Activated CD4-positive, alpha-beta memory T cell treated with anti-CD3 and anti-CD28 coated beads for 36 hours (primary cell): ENCODE measurements at regions of chr19 and their contacts with region 1.

Region 1: DNA sequence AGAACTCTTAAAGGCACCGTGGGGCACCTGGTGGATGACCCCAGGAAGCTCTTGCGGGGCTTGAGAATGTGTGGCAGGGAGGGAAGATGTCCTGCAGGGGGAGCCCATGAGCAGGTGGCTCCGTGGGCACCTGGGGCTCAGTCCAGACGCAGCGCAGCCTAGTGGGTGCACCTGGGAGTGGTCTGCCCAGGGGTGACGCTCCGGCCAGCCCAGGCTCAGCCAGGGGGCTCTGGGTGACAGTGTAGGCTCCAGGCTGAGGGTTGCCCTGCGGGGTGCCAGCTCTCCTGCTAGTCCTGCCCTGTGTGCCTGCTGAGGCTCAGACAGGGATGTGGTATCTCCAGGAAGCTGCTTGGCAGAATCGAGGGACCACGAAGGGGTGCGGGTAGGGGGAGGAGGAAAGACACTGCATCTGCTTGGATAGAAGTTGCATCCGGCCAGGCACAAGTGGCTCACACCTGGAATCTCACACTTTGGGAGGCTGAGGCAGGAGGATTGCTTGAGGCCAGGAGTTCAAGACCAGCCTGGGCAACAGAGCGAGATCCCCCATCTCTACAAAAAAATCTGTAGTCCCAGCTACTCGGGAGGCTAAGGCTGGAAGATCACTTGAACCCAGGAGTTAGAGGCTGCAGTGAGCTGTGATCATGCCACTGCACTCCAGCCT is 15.0 kb upstream of the PGLS start:
- DNase-seq: peak; percentile 89
- H3K4me3 Mint-ChIP-seq: no peak overlapping the region
- H3K27ac Mint-ChIP-seq: no peak overlapping the region
- H3K4me1 Mint-ChIP-seq: peaks cover 15% of the 10 kb centered on the region
- H3K27me3 Mint-ChIP-seq: no peaks in the 10 kb centered on the region

Region 2: GRCh38 chr19:17226002-17226933 is 270.2 kb before region 1 on chr19 and contains the start of gene OCEL1:
- CTCF ChIA-PET with region 1: no interaction called
- POLR2A ChIA-PET with region 1: no interaction called
- intact Hi-C with region 1: no loop called
- DNase-seq: peak; percentile 98
- H3K4me3 Mint-ChIP-seq: peak within 1 kb of the TSS; percentile 91
- H3K27ac Mint-ChIP-seq: peak within 1 kb of the TSS; percentile 97
- H3K4me1 Mint-ChIP-seq: peaks cover 6% of the 10 kb centered on the region
- H3K27me3 Mint-ChIP-seq: no peaks in the 10 kb centered on the region
- total RNA-seq, gene OCEL1: 17.6 to 17.9 TPM

Region 3: GRCh38 chr19:17470068-17470841 is 26.2 kb before region 1 on chr19 and contains the start of gene SLC27A1:
- CTCF ChIA-PET with region 1: interaction called, 29 read pairs
- POLR2A ChIA-PET with region 1: no interaction called
- intact Hi-C with region 1: loop called (anchors 1 kb)
- DNase-seq: peak; percentile 93
- H3K4me3 Mint-ChIP-seq: peak within 1 kb of the TSS; percentile 90
- H3K27ac Mint-ChIP-seq: peak within 1 kb of the TSS; percentile 76
- H3K4me1 Mint-ChIP-seq: peaks cover 25% of the 10 kb centered on the region
- H3K27me3 Mint-ChIP-seq: no peaks in the 10 kb centered on the region
- total RNA-seq, gene SLC27A1: 4.5 to 4.8 TPM

Region 4: GRCh38 chr19:17522988-17523872 is 26.8 kb after region 1 on chr19:
- CTCF ChIA-PET with region 1: interaction called, 14 read pairs
- POLR2A ChIA-PET with region 1: no interaction called
- intact Hi-C with region 1: no loop called
- DNase-seq: peak; percentile 80
- H3K4me3 Mint-ChIP-seq: peak overlapping the region; percentile 24
- H3K27ac Mint-ChIP-seq: peak overlapping the region; percentile 83
- H3K4me1 Mint-ChIP-seq: peaks cover 22% of the 10 kb centered on the region
- H3K27me3 Mint-ChIP-seq: no peaks in the 10 kb centered on the region

Region 5: DNA sequence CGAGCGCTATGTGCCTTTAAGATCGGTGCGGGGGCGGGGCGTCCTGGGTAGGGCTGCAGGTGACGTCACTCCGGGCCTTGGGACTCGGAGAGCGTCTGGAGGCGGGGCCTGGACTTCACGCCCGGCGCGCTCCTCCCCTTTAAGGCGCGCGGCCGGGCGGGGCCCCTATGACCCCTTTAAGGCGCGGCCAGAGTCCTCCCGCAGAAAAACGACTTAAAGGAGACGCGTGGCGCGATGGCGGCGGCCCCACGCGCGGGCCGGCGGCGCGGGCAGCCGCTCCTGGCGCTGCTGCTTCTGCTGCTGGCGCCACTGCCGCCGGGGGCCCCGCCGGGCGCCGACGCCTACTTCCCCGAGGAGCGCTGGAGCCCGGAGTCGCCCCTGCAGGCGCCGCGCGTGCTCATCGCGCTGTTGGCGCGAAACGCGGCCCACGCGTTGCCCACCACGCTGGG is 59.0 kb after region 1 on chr19 and contains the start of gene COLGALT1:
- CTCF ChIA-PET with region 1: interaction called, 12 read pairs
- POLR2A ChIA-PET with region 1: no interaction called
- intact Hi-C with region 1: no loop called
- DNase-seq: peak; percentile 99
- H3K4me3 Mint-ChIP-seq: peak within 1 kb of the TSS; percentile 84
- H3K27ac Mint-ChIP-seq: peak within 1 kb of the TSS; percentile 65
- H3K4me1 Mint-ChIP-seq: peaks cover 10% of the 10 kb centered on the region
- H3K27me3 Mint-ChIP-seq: no peaks in the 10 kb centered on the region
- total RNA-seq, gene COLGALT1: 46.6 to 46.8 TPM

Region 6: GRCh38 chr19:17576759-17577473 is 80.4 kb after region 1 on chr19:
- CTCF ChIA-PET with region 1: interaction called, 22 read pairs
- POLR2A ChIA-PET with region 1: no interaction called
- intact Hi-C with region 1: loop called (anchors 2 kb)
- DNase-seq: peak; percentile 43
- H3K4me3 Mint-ChIP-seq: no peak overlapping the region
- H3K27ac Mint-ChIP-seq: no peak overlapping the region
- H3K4me1 Mint-ChIP-seq: no peaks in the 10 kb centered on the region
- H3K27me3 Mint-ChIP-seq: no peaks in the 10 kb centered on the region